Dendritic cell treated with granulocyte-macrophage colony-stimulating factor and Interleukin-4, amounts not matched to agents 40 ng/mL and 50 ng/mL, for 4 days (primary cell): ENCODE measurements at regions of chr22 and their contacts with region 1.

Region 1: DNA sequence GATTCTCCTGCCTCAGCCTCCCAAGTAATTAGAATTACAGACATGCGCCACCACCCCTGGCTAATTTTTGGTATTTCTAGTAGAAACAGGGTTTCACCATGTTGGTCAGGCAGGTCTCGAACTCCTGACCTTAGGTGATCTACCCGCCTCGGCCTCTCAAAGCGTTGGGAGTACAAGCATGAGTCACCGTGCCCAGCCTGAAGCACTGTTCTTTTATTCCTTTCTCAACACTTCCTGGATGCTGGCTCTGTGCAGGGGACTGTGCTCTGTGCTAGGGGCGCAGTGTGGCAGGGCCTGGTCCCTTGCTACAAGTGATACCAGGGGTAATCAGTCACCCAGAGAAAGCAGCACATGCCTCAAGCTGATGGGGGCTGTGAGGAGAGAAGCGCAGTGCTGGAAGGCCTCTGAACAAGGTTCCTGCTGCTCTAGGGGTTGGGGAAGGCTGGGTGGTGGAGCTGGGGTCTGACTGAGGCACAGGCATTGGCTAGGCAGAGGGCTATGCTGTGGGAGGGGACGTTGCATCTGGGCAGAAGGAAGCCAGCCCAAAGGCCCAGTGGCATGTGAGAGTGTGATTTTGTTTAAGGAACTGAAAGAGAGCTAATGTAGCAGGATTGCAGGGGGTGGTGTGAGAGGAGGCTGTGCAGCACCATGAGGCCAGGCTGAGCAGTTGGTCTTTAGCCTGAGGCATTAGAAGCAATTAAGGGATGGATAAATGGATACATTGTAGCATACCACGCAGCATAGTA is 42.5 kb downstream of the CABIN1 start:
- H3K4me3 Mint-ChIP-seq: no peak overlapping the region
- H3K27ac Mint-ChIP-seq: peak overlapping the region; percentile 87
- H3K4me1 Mint-ChIP-seq: peaks cover 20% of the 10 kb centered on the region
- H3K27me3 Mint-ChIP-seq: no peaks in the 10 kb centered on the region

Region 2: GRCh38 chr22:23893943-23894709 is 159.5 kb before region 1 on chr22 and contains the start of gene MIF:
- intact Hi-C with region 1: no loop called
- H3K4me3 Mint-ChIP-seq: peak within 1 kb of the TSS; percentile 96
- H3K27ac Mint-ChIP-seq: peak within 1 kb of the TSS; percentile 97
- H3K4me1 Mint-ChIP-seq: peaks cover 49% of the 10 kb centered on the region
- H3K27me3 Mint-ChIP-seq: peaks cover 7% of the 10 kb centered on the region

Region 3: DNA sequence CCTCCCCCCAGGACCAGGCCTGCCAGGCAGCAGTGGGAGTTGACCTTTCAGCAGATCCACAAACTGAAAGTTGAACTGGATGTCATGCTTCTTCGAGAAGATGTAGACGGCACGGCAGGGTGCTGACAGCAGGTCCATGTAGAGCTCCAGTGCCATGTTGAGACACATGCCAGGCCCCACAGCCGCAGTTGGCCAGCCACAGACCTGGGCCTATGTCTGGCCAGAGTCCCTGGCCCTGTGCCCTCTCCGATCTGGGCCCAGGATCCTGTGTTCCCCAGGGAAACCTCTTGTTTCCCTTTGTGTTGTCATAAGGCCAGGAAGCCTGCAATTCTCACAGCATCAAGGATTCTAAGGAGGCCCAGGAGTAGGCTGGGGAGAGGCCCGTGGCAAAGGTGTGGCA is 48.5 kb before region 1 on chr22 and contains the start of gene GSTT4:
- intact Hi-C with region 1: loop called (anchors 2 kb)
- H3K4me3 Mint-ChIP-seq: peak within 1 kb of the TSS; percentile 30
- H3K27ac Mint-ChIP-seq: peak within 1 kb of the TSS; percentile 60
- H3K4me1 Mint-ChIP-seq: peaks cover 57% of the 10 kb centered on the region
- H3K27me3 Mint-ChIP-seq: peaks cover 7% of the 10 kb centered on the region